ENCODE measurements at regions of chr3 and their contacts with region 1.

Region 1: GRCh38 chr3:15377961-15378791 is 45.8 kb upstream of the SH3BP5 start:
- DNase-seq: peak; percentile 97
- ATAC-seq: peak; percentile 90
- H3K4me3 ChIP-seq: peak overlapping the region in 1 of 5 experiments; percentile 9
- H3K4me3 Mint-ChIP-seq: peak overlapping the region; percentile 53
- H3K27ac ChIP-seq: peak overlapping the region; percentile 88 to 91
- H3K27ac Mint-ChIP-seq: peak overlapping the region; percentile 95
- H3K4me1 ChIP-seq: peaks cover 37% of the 10 kb centered on the region in 2 donors
- H3K4me1 Mint-ChIP-seq: peaks cover 29% of the 10 kb centered on the region
- H3K27me3 ChIP-seq: no peaks in the 10 kb centered on the region
- H3K27me3 Mint-ChIP-seq: no peaks in the 10 kb centered on the region
- CTCF ChIP-seq: peak; percentile 96

Region 2: GRCh38 chr3:15291589-15292541 is 86.3 kb before region 1 on chr3:
- CTCF ChIA-PET with region 1: interaction called, 12 read pairs
- POLR2A ChIA-PET with region 1: interaction called, 3 read pairs
- intact Hi-C with region 1: no loop called
- DNase-seq: peak; percentile 87
- ATAC-seq: peak; percentile 80
- H3K4me3 ChIP-seq: peak overlapping the region in 3 of 5 experiments; percentile 5 to 30 (median 27)
- H3K4me3 Mint-ChIP-seq: peak overlapping the region; percentile 83
- H3K27ac ChIP-seq: peak overlapping the region; percentile 58 to 87
- H3K27ac Mint-ChIP-seq: peak overlapping the region; percentile 97
- H3K4me1 ChIP-seq: peaks cover 96 to 99% of the 10 kb centered on the region in 2 donors
- H3K4me1 Mint-ChIP-seq: peaks cover 89% of the 10 kb centered on the region
- H3K27me3 ChIP-seq: no peaks in the 10 kb centered on the region
- H3K27me3 Mint-ChIP-seq: no peaks in the 10 kb centered on the region
- CTCF ChIP-seq: no peak

Region 3: DNA sequence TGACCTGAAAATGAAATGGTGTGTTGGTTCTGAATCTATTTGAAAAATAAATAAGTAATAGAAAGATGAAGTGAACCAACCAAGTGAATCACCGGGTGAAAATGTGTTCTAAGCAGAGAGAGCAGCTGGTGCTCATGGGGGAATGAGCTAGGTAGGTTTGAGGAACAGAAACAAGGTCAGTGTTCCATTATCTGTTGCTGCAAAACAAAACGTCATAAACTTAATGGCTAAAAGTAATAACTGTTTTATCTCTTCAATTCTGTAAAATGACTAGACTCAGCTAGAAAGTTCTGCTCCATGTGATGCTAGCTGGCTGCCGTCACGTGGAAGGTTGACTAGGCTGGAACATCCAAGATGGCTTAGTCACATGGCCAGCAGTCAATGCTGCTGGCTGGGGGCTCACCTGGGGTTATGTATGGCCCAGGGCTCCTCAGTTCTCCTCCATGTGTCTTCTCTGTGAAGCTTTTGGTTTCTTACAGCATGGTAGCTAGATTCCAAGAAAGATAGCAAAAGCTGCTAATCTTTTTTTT is 32.5 kb before region 1 on chr3:
- CTCF ChIA-PET with region 1: interaction called, 5 read pairs
- POLR2A ChIA-PET with region 1: interaction called, 3 read pairs
- intact Hi-C with region 1: loop called (anchors 1 kb)
- DNase-seq: peak; percentile 87
- ATAC-seq: peak; percentile 89
- H3K4me3 ChIP-seq: peak overlapping the region in 1 of 5 experiments; percentile 7
- H3K4me3 Mint-ChIP-seq: peak overlapping the region; percentile 76
- H3K27ac ChIP-seq: peak overlapping the region; percentile 92 to 94
- H3K27ac Mint-ChIP-seq: peak overlapping the region; percentile 99
- H3K4me1 ChIP-seq: peaks cover 73 to 80% of the 10 kb centered on the region in 2 donors
- H3K4me1 Mint-ChIP-seq: peaks cover 71% of the 10 kb centered on the region
- H3K27me3 ChIP-seq: no peaks in the 10 kb centered on the region
- H3K27me3 Mint-ChIP-seq: no peaks in the 10 kb centered on the region
- CTCF ChIP-seq: no peak

Region 4: GRCh38 chr3:15361494-15362212 is 16.5 kb before region 1 on chr3:
- CTCF ChIA-PET with region 1: interaction called, 19 read pairs
- POLR2A ChIA-PET with region 1: interaction called, 4 read pairs
- intact Hi-C with region 1: loop called (anchors 1 kb)
- DNase-seq: peak; percentile 64
- ATAC-seq: peak; percentile 66
- H3K4me3 ChIP-seq: peak overlapping the region; percentile 5 to 54 (median 19)
- H3K4me3 Mint-ChIP-seq: peak overlapping the region; percentile 76
- H3K27ac ChIP-seq: peak overlapping the region; percentile 95 to 96
- H3K27ac Mint-ChIP-seq: peak overlapping the region; percentile 80
- H3K4me1 ChIP-seq: peaks cover 48 to 63% of the 10 kb centered on the region in 2 donors
- H3K4me1 Mint-ChIP-seq: peaks cover 59% of the 10 kb centered on the region
- H3K27me3 ChIP-seq: no peaks in the 10 kb centered on the region
- H3K27me3 Mint-ChIP-seq: no peaks in the 10 kb centered on the region
- CTCF ChIP-seq: no peak

Region 5: DNA sequence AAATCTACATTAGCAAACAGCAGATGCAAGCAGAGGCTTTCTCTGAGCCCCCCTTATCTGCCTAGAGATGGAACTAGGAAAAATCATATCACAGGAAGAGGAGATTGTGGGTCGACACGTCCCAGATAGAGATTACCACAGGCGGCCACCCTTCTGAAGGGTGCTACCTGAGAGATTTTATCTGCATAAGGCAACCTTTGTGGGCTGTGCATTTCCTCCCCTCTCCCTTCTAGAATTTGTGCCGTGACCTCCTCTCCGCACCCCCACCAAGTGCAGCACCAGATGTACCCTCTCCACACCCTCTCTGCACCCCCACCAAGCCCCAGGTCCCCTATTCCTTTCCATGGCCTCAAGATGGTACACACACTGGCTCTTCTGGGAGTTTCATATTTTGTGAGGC is 21.8 kb after region 1 on chr3:
- CTCF ChIA-PET with region 1: interaction called, 31 read pairs
- POLR2A ChIA-PET with region 1: no interaction called
- intact Hi-C with region 1: loop called (anchors 2 kb)
- DNase-seq: no peak
- ATAC-seq: no peak
- H3K4me3 ChIP-seq: no peak overlapping the region
- H3K4me3 Mint-ChIP-seq: no peak overlapping the region
- H3K27ac ChIP-seq: no peak overlapping the region
- H3K27ac Mint-ChIP-seq: no peak overlapping the region
- H3K4me1 ChIP-seq: peaks cover 24 to 31% of the 10 kb centered on the region in 2 donors
- H3K4me1 Mint-ChIP-seq: peaks cover 39% of the 10 kb centered on the region
- H3K27me3 ChIP-seq: no peaks in the 10 kb centered on the region
- H3K27me3 Mint-ChIP-seq: no peaks in the 10 kb centered on the region
- CTCF ChIP-seq: no peak

Region 6: DNA sequence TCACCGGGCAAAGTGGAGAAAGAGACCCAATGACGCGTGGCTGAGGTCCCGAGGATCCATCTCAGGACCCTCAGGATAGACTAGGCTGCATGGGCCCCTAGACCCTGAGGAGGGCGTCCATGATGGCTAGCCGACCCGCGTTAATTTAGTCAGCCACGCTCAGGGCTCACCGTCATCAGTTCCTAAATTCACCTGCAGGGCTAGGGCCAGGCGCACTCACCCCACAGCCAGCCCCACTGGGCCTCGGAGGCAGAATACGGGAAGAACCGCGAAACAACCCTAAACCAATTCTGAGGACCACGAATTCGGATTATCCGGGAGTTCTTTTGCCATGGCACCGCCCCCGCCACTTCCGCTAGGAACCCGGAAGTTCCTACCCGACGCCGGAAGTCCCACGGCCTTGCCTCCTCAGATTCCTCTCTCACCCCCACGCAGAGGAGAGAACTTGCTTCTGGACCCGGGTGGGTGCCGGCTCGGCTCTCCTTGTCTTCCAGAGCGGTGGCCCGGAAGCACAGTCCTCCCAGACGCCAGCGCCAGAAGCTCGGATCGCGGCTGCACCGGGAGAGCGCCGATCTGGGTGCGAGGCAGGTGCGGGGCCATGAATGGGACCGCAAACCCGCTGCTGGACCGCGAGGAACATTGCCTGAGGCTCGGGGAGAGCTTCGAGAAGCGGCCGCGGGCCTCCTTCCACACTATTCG is 49.2 kb after region 1 on chr3 and contains the starts of genes EAF1 and METTL6:
- CTCF ChIA-PET with region 1: no interaction called
- POLR2A ChIA-PET with region 1: interaction called, 5 read pairs
- intact Hi-C with region 1: loop called (anchors 2 kb)
- DNase-seq: peak; percentile 88
- ATAC-seq: peak; percentile 89
- H3K4me3 ChIP-seq: peak within 1 kb of the TSS; percentile 88 to 99 (median 94)
- H3K4me3 Mint-ChIP-seq: peak within 1 kb of the TSS; percentile 95
- H3K27ac ChIP-seq: peak within 1 kb of the TSS; percentile 75 to 85
- H3K27ac Mint-ChIP-seq: peak within 1 kb of the TSS; percentile 92
- H3K4me1 ChIP-seq: peaks cover 19 to 28% of the 10 kb centered on the region in 2 donors
- H3K4me1 Mint-ChIP-seq: peaks cover 45% of the 10 kb centered on the region
- H3K27me3 ChIP-seq: no peaks in the 10 kb centered on the region
- H3K27me3 Mint-ChIP-seq: no peaks in the 10 kb centered on the region
- CTCF ChIP-seq: peak; percentile 56
- total RNA-seq, gene EAF1: 19.8 TPM in 2 replicates
- total RNA-seq, gene METTL6: 23.9 and 27.1 TPM in 2 replicates

Measured in B cell (primary cell).